ENCODE measurements at regions of chr10 and their contacts with region 1.

Region 1: DNA sequence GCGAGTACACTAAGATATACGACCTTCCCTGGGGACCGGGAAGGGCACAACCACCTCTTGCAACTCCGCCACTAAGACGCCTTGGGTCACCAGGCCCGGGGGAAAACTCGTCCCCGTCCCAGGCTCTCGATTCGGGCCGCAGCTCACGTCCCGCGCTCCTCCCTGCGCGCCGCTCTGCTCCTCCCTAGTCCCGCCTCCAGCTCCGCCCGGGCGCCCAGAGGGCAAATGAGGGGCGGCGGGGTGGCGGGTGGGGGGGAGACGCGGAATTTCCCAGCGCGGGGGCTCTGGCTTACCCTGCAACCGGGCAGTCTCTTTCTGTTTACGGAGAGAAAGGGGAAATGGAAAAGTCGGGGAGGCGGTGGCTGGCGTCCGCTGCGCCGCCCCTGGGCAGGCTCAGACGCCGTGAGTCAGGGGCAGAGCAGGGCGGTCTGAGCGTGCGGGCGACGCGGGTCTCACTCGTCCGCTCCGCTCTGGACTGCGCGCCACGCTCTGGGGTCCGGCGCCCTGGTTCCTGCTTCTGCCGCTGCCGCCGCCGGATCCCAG is at the start of gene MAP3K8:
- DNase-seq: peak; percentile 87
- ATAC-seq: peak; percentile 73
- H3K4me3 Mint-ChIP-seq: peak within 1 kb of the TSS; percentile 90
- H3K27ac Mint-ChIP-seq: peak within 1 kb of the TSS; percentile 96
- H3K4me1 Mint-ChIP-seq: peaks cover 58% of the 10 kb centered on the region
- H3K27me3 Mint-ChIP-seq: peaks cover 29% of the 10 kb centered on the region
- CTCF ChIP-seq: no peak
- total RNA-seq, gene MAP3K8: 9.8 to 13.8 TPM (median 11.8 TPM) in 3 replicates

Region 2: GRCh38 chr10:30422981-30423654 is 10.7 kb before region 1 on chr10:
- CTCF ChIA-PET with region 1: interaction called, 4 read pairs
- POLR2A ChIA-PET with region 1: interaction called, 19 read pairs
- DNase-seq: peak; percentile 46
- ATAC-seq: peak; percentile 89
- H3K4me3 Mint-ChIP-seq: 0 out of 2 replicates have a peak overlapping the region, but pooled peaks have one; percentile 8
- H3K27ac Mint-ChIP-seq: peak overlapping the region; percentile 94
- H3K4me1 Mint-ChIP-seq: peaks cover 41% of the 10 kb centered on the region
- H3K27me3 Mint-ChIP-seq: no peaks in the 10 kb centered on the region
- CTCF ChIP-seq: no peak

Measured in WTC11 (cell line).